ENCODE measurements at regions of chr14 and their contacts with region 1.

Region 1: DNA sequence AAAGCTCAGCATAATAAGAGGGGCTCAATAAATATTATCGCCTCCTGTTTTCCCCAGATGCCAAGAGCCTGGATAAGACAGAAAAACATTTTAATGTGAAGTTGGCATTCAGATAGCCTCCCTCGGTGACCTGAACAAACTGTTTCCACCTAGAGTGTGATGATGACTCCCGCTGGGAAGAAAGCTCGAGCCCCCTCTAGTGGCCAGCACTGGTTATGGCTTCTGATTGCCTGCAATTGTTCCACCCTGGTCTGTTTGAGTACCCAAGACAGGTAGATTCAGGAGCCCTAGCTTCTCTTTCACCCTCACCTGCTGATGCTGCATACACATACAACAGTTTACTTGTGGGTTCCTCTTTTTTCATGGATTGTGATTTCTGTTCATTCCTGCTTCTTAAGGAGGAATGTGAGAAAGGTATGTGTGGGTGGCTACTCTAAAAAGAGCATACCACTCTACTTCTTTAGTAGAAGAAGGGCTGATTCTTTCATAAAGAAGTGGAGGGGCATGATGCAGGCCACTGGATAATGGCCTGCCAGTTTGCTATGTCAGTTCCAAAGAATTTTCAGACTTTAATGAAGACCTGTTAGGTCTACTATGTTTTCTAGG is 6.4 kb downstream of the ERG28 start:
- DNase-seq: peak; percentile 87
- H3K4me3 Mint-ChIP-seq: no peak overlapping the region
- H3K27ac Mint-ChIP-seq: peak overlapping the region; percentile 11
- H3K4me1 Mint-ChIP-seq: peaks cover 5% of the 10 kb centered on the region
- H3K27me3 Mint-ChIP-seq: no peaks in the 10 kb centered on the region

Region 2: DNA sequence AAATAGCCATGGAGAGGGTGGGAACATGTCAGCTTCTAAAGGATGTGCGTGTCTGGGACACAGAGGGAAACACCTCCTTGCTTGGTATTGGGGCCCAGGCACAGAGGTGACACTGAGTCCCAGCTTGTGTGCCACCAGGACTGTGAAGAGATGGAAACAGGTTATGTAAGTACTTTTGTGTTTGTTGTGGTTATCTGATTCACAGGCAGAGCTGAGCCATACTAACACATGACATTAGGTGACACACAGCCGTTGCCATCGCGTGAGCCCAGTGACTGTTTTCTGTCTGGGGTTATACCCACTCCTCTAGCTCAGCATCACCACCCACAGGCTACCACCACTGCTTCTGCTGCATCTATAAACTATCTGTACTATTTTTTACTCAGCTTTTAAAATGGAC is 87.9 kb before region 1 on chr14:
- CTCF ChIA-PET with region 1: interaction called, 10 read pairs
- DNase-seq: peak; percentile 81
- H3K4me3 Mint-ChIP-seq: no peak overlapping the region
- H3K27ac Mint-ChIP-seq: peak overlapping the region; percentile 90
- H3K4me1 Mint-ChIP-seq: peaks cover 58% of the 10 kb centered on the region
- H3K27me3 Mint-ChIP-seq: no peaks in the 10 kb centered on the region

Region 3: DNA sequence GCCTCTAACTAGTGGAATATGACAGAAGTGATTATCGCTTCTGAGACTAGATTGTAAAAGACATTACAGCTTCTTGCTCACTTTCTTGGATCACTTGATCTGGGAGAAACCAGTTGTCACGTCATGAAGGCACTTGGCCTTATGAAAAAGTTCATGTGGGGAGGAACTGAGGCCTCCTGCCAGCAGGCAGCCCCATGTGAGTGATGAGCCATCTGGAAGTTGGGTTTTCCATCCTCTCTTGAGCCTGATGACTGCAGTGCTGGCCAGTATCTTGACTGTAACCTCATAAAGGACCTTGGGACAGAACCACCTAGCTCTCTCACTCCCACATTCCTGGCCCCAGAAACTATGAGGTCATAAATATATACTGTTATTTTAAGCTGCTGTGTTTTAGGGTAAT is 34.8 kb after region 1 on chr14:
- CTCF ChIA-PET with region 1: no interaction called
- DNase-seq: no peak
- H3K4me3 Mint-ChIP-seq: no peak overlapping the region
- H3K27ac Mint-ChIP-seq: no peak overlapping the region
- H3K4me1 Mint-ChIP-seq: no peaks in the 10 kb centered on the region
- H3K27me3 Mint-ChIP-seq: no peaks in the 10 kb centered on the region